K562 (cell line): ENCODE measurements at regions of chr2 and their contacts with region 1.

Region 1: DNA sequence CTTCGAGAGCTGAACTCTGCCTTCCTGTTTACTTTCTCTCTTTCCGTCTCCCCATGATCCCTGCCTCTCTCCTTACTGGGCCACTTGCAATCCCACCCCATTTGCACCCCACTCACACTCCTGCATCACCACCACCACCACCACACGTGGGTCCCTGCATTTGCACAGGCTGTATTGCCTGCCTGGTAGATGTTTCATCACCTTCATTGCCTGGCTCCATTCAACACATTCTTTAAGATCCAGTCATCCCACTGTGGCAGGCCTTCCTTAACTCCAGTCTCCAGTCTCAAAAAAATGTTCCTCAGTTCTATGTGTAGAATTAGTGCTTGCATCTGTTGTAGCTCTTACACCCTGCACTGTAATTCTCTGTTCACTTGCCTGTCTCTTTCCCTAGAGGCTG is 13.9 kb downstream of the NOSTRIN start:
- DNase-seq: no peak
- ATAC-seq: no peak
- H3K4me3 ChIP-seq: no peak overlapping the region
- H3K27ac ChIP-seq: no peak overlapping the region
- H3K4me1 ChIP-seq: peaks cover 0 to 21% of the 10 kb centered on the region in 2 experiments; a peak in 4 of 5 replicates
- H3K27me3 ChIP-seq: no peaks in the 10 kb centered on the region
- CTCF ChIP-seq: no peak
- EP300 ChIP-seq: no peak
- POLR2A ChIP-seq: no peak
- RAD21 ChIP-seq: no peak

Region 2: GRCh38 chr2:168801961-168802858 is 14.2 kb before region 1 on chr2 and contains the start of gene NOSTRIN:
- CTCF ChIA-PET with region 1: no interaction called
- POLR2A ChIA-PET with region 1: interaction called, 81 read pairs
- in situ Hi-C with region 1: no loop called
- intact Hi-C with region 1: no loop called
- DNase-seq: peak; percentile 51 to 87 (median 61)
- ATAC-seq: peak; percentile 68
- H3K4me3 ChIP-seq: peak within 1 kb of the TSS; percentile 38
- H3K27ac ChIP-seq: peak within 1 kb of the TSS; percentile 89
- H3K4me1 ChIP-seq: peaks cover 18 to 81% of the 10 kb centered on the region in 2 experiments
- H3K27me3 ChIP-seq: no peaks in the 10 kb centered on the region
- CTCF ChIP-seq: no peak; a peak in 1 of 6 replicates
- EP300 ChIP-seq: peak; percentile 45
- POLR2A ChIP-seq: peak; percentile 69
- RAD21 ChIP-seq: no peak; a peak in 1 of 4 replicates
- polyA plus RNA-seq, gene NOSTRIN: 51.9 to 82.9 TPM